ENCODE measurements at regions of chr4 and their contacts with region 1.

Region 1: DNA sequence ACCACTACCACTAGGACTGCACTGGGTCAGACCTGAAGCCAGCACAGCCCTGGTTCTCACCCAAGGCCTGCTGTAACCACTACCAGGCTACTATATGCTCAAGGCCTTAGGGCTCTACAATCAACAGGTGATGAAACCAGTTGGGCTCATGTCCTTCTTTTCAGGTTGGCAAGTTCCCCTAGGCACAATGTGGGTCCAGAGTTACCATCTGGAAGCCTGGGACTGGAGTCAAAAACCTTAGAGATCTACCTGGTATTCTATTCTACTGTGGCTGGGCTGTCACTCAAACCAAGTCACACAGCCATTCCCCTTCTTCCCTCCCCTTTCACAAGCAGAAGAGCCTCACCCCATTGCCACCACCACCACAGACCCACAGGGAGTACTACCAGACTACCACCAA is 175.6 kb downstream of the RELL1 start:
- DNase-seq: no peak
- H3K4me3 ChIP-seq: no peak overlapping the region
- H3K27ac ChIP-seq: no peak overlapping the region
- H3K4me1 ChIP-seq: no peaks in the 10 kb centered on the region
- H3K27me3 ChIP-seq: no peaks in the 10 kb centered on the region
- CTCF ChIP-seq: no peak
- EP300 ChIP-seq: no peak
- POLR2A ChIP-seq: no peak

Region 2: GRCh38 chr4:37188100-37188499 is 322.5 kb before region 1 on chr4:
- in situ Hi-C with region 1: no loop called
- intact Hi-C with region 1: no loop called
- DNase-seq: no peak
- H3K4me3 ChIP-seq: no peak overlapping the region
- H3K27ac ChIP-seq: no peak overlapping the region
- H3K4me1 ChIP-seq: peaks cover 0 to 2% (median 0%) of the 10 kb centered on the region in 4 donors
- H3K27me3 ChIP-seq: no peaks in the 10 kb centered on the region
- CTCF ChIP-seq: no peak
- EP300 ChIP-seq: no peak
- POLR2A ChIP-seq: no peak

Region 3: DNA sequence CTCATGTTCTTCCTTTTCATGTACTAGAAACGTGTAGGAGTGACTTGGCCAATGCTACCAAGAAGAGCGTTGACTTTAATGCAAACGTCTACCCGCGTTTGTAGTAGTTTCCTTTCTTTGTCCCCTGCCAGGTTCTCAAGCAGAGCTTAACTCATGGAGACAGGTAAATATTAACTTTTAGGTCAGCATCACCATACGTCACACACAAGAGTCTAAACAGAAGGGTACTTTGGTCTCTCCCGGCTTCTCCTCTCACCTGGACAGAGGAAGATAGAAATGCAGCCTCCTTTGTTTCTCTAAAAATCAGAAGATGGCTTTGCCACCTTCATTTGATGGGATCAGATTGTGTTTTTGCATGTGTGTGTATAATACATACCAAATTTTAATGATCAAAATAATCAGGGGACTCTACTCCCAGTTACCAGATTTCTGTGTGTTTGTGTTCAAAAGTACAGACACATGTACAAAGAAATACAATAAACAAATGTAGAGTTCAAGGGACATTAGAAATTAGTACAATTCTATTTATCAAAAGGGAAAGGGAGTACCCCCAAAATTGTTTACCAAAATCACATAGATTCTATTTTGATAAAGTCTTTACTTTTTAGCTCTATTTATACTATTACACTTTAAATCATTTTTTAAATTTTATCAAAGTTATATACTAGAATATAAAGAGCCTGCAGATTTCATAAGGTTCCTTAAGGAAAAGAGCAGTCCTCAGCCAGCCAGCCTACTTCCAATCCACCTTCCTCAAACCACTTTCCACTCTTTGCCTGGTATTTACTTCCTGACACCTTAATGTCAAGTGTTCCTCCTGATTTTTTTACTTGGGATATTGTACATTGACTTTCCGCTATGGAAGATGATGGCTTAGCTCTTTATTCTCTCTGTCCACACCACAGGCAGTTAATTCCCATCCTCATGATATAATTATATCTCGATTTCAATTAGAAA is 20.0 kb before region 1 on chr4:
- in situ Hi-C with region 1: no loop called
- intact Hi-C with region 1: loop called (anchors 2 kb)
- DNase-seq: no peak
- H3K4me3 ChIP-seq: no peak overlapping the region
- H3K27ac ChIP-seq: peak overlapping the region in 3 of 4 donors; percentile 57 to 63 (median 63)
- H3K4me1 ChIP-seq: peaks cover 0 to 50% (median 13%) of the 10 kb centered on the region in 4 donors
- H3K27me3 ChIP-seq: no peaks in the 10 kb centered on the region
- CTCF ChIP-seq: no peak
- EP300 ChIP-seq: no peak
- POLR2A ChIP-seq: no peak